ENCODE measurements at regions of chr2 and their contacts with region 1.

Region 1: DNA sequence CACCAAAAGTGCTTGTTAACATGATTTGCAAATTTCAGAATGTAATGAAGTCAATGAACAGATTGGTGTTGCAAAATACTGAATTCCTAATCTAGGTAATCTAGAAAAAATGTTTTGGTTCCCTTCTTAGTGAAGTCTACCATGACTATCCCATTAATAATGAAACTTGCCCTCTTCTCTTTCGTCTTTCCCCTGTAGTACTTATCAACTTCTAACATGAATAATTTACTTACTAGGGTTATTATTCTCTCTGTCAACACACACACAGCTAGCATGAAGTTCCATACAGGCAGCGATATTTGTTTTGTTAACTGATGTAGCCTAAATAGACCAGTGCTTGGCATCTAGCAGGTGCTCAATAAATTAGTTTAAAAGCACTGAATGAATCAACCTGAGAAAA is 160.2 kb downstream of the NCK2 start:
- DNase-seq: no peak
- ATAC-seq: no peak
- H3K4me3 ChIP-seq: no peak overlapping the region
- H3K27ac ChIP-seq: no peak overlapping the region
- H3K4me1 ChIP-seq: peaks cover 8 to 10% of the 10 kb centered on the region in 2 donors
- H3K27me3 ChIP-seq: no peaks in the 10 kb centered on the region

Region 2: DNA sequence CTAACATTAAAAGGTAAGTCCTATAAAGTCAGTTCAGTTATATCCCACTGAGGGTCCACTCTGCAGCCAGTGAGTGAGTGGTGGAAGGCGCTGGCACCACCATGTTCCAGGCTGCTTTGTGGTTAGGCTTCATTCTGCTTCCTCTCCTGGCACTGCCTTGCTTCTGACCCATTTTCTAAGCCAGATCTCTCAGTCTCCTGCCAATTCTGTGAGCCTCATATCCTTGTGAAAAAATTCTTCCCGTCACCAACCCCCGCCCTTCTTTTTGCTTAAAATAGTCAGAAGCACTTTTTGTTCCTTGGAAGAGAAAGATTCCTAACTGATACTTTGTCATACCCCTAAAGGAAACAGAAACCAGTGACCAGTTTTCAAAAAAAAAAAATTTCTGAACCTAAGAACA is 300.0 kb before region 1 on chr2:
- intact Hi-C with region 1: loop called in 1 of 2 experiments (anchors 10 kb)
- DNase-seq: peak in 1 of 2 donors; percentile 57
- ATAC-seq: peak; percentile 81
- H3K4me3 ChIP-seq: no peak overlapping the region
- H3K27ac ChIP-seq: no peak overlapping the region
- H3K4me1 ChIP-seq: no peaks in the 10 kb centered on the region
- H3K27me3 ChIP-seq: no peaks in the 10 kb centered on the region